ENCODE measurements at regions of chr18 and their contacts with region 1.

Region 1: DNA sequence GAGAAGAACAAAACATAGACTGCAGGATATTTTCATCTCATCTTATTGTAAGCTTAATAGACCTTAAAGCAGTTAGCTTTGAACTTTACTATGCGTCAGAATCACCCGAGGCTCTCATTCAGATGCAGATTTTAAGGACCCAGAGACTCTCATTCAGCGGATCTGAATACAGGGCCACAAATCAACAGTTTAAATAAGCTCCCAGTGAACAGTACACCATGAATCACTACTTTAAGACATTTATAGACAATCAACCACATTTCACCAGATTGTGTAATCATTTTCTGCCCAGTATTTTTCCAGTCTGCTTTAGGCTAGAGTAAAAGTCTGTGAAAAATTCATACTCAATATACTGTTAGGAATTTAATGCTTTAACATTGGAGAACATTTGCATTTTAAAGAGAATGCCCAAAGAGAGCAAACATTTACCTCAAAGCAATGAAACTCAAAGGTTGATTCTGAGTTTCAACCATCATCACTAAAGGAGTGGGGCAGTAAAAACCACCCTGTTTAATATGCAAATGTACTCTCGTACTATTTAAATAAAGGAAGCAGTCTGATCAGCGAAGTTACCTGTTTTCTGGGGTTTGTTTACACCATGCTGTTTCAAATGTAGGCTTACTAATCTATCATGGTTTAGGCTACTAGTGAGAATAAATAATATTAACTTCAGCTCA is 11.0 kb upstream of the ALPK2 start:
- DNase-seq: no peak
- ATAC-seq: peak; percentile 62
- H3K4me3 Mint-ChIP-seq: peak overlapping the region; percentile 21
- H3K27ac Mint-ChIP-seq: peak overlapping the region; percentile 71
- H3K4me1 Mint-ChIP-seq: peaks cover 22% of the 10 kb centered on the region
- H3K27me3 Mint-ChIP-seq: no peaks in the 10 kb centered on the region
- CTCF ChIP-seq: no peak

Region 2: DNA sequence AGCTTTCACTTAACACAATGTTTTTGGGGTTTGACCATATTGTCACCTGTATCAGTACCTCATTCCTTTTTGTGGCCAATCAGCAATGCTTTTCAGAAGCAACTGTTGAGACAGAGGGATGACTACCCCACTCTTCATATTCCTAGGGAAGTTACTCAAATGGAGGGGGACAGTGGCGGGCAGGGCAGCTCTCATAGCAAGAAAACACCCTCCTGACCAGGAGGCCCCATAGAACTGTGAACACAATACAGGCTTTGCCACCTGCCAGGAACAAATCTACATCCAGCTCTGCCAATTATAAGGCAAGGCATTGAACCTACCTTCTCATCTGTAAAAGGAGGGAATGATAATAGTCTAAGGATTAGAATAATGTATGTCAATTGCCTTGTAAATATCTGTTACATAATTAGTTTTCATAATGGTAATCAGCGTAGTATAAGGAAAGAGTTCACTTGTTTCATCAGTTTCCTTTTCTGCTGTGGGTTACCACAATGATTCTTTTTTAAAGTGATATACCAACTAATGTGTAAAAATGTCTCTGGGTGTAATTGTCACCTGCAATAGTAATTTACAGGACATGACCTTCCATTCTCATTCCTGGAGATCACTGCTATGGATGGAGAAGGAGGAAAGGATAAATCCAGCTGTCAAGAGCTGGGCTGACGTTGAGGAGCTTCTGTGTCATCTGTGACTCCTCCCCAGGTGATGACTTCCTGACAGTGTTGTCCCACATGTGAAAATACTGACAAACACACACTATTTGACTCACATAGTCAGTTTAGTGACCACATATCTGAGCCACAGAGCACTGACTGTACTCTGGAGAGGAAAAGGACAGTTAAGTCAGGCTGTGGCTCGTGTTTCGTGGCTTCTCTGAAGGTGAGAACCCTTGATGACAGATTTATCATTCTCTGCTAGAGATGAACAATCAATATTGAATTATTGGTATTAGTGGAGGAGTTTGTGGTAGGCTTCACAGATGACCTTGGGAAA is 24.5 kb before region 1 on chr18:
- CTCF ChIA-PET with region 1: no interaction called
- POLR2A ChIA-PET with region 1: no interaction called
- intact Hi-C with region 1: loop called (anchors 2 kb)
- DNase-seq: no peak
- ATAC-seq: peak; percentile 54
- H3K4me3 Mint-ChIP-seq: peak overlapping the region; percentile 33
- H3K27ac Mint-ChIP-seq: peak overlapping the region; percentile 35
- H3K4me1 Mint-ChIP-seq: peaks cover 38% of the 10 kb centered on the region
- H3K27me3 Mint-ChIP-seq: no peaks in the 10 kb centered on the region
- CTCF ChIP-seq: no peak

Region 3: GRCh38 chr18:58649966-58650816 is 10.3 kb after region 1 on chr18:
- CTCF ChIA-PET with region 1: no interaction called
- POLR2A ChIA-PET with region 1: interaction called, 3 read pairs
- intact Hi-C with region 1: loop called (anchors 1 kb)
- DNase-seq: no peak
- ATAC-seq: peak; percentile 93
- H3K4me3 Mint-ChIP-seq: peak overlapping the region; percentile 24
- H3K27ac Mint-ChIP-seq: peak overlapping the region; percentile 74
- H3K4me1 Mint-ChIP-seq: peaks cover 69% of the 10 kb centered on the region
- H3K27me3 Mint-ChIP-seq: no peaks in the 10 kb centered on the region
- CTCF ChIP-seq: no peak